AG04449 (cell line): ENCODE measurements at regions of chr4 and their contacts with region 1.

Region 1: GRCh38 chr4:186587416-186588018 is 32.1 kb upstream of the MTNR1A start:
- DNase-seq: no peak
- H3K4me3 ChIP-seq: no peak overlapping the region
- CTCF ChIP-seq: peak; percentile 63

Region 2: DNA sequence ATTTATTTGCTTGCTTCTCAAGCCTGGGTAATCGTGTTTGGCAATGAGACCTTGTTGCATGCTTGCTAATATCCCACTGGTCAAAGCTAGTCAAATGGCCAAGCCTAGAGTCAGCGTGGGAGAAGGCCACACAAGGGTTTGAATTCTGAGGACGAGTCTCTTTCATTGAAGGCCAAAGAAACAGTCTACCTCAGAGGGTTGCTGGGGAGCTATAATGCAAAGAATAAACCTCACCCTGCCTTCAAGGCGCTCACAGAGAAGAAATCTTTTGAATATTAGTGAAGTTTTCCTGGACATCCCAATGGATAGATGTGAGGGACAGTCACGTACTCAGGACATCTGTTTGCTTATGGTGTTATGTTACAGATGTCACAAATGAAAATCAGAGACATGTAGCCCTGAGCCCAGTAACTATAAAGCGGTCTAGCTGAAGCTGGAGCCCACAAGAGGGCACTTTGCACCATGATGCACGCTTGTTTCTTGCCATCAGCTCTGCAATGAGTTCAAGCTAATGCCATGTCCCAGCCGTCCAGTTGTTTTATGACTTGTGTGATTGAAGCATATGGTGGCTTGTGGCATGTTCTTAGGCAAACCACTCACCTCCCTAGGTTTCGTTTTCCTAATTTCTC is 519.6 kb before region 1 on chr4:
- CTCF ChIA-PET with region 1: no interaction called
- POLR2A ChIA-PET with region 1: no interaction called
- DNase-seq: no peak
- H3K4me3 ChIP-seq: no peak overlapping the region
- CTCF ChIP-seq: peak; percentile 10

Region 3: GRCh38 chr4:186158021-186158813 is 429.3 kb before region 1 on chr4:
- CTCF ChIA-PET with region 1: no interaction called
- POLR2A ChIA-PET with region 1: no interaction called
- DNase-seq: no peak
- H3K4me3 ChIP-seq: no peak overlapping the region
- CTCF ChIP-seq: no peak

Region 4: GRCh38 chr4:186297013-186297645 is 290.4 kb before region 1 on chr4:
- CTCF ChIA-PET with region 1: interaction called, 47 read pairs
- POLR2A ChIA-PET with region 1: no interaction called
- DNase-seq: peak; percentile 9
- H3K4me3 ChIP-seq: peak overlapping the region; percentile 8
- CTCF ChIP-seq: peak; percentile 42

Region 5: GRCh38 chr4:186428481-186428880 is 159.0 kb before region 1 on chr4:
- CTCF ChIA-PET with region 1: no interaction called
- POLR2A ChIA-PET with region 1: no interaction called
- DNase-seq: no peak
- H3K4me3 ChIP-seq: no peak overlapping the region
- CTCF ChIP-seq: no peak

Region 6: DNA sequence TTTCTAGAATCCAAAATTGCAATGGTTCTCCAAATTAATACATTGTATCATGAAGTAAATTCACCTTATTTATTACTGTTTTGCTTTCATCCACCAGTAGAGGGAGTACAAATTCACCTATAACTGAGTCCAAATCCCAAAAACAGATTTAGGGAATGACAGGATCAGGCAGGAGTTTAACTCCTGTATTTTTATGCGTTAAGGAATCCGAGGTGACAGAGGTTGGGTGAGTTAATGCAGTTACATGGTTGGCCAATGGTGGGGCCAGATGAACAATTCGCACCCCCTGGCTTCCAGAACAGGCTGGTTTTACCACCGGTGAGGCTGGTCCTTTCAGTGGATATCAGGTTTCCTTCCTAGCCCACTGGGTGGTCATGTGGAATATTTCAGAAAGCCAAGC is 114.6 kb before region 1 on chr4:
- CTCF ChIA-PET with region 1: interaction called, 28 read pairs
- POLR2A ChIA-PET with region 1: no interaction called
- DNase-seq: no peak
- H3K4me3 ChIP-seq: no peak overlapping the region
- CTCF ChIP-seq: peak; percentile 44

Region 7: DNA sequence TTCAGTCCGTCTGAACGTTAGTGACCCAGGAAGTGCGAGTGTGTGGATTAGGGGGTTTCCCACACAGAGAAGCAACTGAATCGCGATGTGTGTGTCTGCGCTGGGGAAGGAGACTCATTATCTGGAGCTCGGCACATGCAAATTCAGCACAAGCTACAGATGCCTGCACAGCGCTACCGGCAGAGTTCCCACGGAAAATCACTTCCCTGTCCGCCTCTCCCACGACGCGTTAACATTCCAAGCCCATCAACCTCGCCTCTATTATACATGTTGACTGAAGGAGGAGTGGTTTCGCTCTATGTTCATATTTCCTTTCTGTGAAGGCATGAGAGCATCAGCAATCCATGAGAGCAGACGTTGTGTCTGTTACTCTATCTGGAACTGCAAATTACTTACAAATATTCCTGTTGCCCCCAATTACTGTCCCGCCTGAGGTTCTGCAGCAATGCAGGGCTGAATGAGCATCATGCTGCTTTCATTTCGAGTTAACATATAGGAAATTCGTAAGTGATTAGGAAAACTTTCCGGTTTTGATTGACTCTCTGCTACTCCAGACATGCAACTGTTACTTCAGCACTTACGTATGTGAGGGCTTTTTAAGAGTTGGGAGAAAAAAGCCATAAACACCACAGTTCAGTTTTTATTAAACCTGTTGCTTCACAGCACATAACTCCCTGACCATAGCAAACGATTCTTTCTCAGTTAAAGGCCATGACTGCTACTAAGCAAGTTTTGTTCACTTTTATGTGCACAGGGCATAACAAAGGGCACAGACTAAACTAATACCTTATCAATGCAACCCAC is 17.1 kb before region 1 on chr4:
- CTCF ChIA-PET with region 1: interaction called, 23 read pairs
- POLR2A ChIA-PET with region 1: no interaction called
- DNase-seq: peak; percentile 21
- H3K4me3 ChIP-seq: peak overlapping the region; percentile 23
- CTCF ChIP-seq: no peak

Region 8: GRCh38 chr4:186598686-186599085 is 11.2 kb after region 1 on chr4:
- CTCF ChIA-PET with region 1: interaction called, 60 read pairs
- POLR2A ChIA-PET with region 1: no interaction called
- DNase-seq: no peak
- H3K4me3 ChIP-seq: no peak overlapping the region
- CTCF ChIP-seq: no peak

Region 9: DNA sequence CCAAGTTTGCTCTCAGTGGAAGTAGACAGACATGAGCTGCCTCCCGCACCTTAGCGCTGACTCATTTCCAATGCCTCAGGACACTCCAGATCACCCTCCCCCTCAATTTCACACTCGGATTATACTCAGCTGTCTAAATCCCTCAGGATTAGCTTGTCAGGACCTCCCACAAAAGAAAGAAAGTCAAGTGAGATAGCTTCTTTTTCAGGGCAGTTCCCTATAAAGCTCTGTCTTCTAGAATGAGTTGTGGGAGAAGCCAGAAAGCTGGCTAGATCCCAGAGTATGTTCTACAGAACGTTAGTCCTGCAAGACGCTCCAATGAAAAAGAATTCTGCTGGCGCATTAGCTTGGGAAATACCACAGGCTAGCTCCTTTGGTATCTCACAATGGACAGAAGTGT is 19.1 kb after region 1 on chr4:
- CTCF ChIA-PET with region 1: interaction called, 60 read pairs
- POLR2A ChIA-PET with region 1: no interaction called
- DNase-seq: no peak
- H3K4me3 ChIP-seq: no peak overlapping the region
- CTCF ChIP-seq: no peak

Region 10: DNA sequence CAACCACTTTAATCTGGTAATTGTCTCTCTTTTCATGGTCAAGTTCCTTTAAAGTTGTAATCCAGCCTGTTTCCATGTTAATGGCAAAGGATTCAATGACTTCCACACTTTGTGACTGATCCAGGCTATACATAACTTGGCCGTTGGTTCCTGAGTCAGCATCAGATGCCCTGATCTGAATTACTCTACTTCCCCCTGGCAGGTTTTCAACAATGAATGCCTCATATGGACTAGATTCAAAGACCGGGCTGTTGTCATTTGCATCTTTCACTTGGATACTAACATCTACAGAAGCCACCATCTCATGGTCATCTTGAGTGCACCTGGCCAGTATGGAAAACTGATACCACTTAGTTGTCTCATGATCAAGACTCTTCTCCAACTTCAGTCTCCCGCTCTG is 30.4 kb after region 1 on chr4:
- CTCF ChIA-PET with region 1: interaction called, 11 read pairs
- POLR2A ChIA-PET with region 1: no interaction called
- DNase-seq: no peak
- H3K4me3 ChIP-seq: no peak overlapping the region
- CTCF ChIP-seq: no peak